IMR-90 (cell line): ENCODE measurements at regions of chr17 and their contacts with region 1.

Region 1: DNA sequence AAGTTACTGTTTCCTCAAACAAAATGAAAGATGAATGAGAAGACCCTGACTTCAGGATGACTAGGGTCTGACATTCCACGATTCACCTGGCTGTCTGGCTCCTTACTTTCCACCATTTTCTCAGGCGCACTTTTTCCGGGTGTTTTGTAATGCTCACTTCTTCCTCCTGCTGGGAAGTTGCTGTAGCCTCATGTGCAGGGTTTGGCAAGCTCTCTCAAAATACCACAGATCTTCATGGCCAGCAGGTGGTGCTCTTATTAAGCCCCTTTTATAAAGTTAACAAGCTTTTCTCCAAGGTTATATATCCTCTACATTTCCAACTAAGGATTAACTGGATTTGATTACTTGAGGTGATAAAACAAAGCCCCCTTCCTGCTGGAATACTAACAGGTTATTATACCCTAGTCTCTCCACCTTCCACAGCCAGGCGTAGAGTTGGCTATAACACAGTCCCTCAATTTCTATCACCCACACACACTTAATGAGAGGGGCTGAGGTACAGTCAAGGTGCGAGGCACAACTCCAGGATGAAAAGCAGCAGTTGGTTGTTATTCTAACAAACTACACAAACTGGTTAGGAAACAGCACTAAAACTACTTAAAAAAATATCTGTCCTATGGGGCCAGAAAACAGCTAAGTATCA is 45.4 kb downstream of the STH start:
- DNase-seq: peak; percentile 87
- ATAC-seq: peak; percentile 81
- H3K4me3 ChIP-seq: no peak overlapping the region
- H3K27ac ChIP-seq: no peak overlapping the region
- H3K4me1 ChIP-seq: no peaks in the 10 kb centered on the region
- H3K27me3 ChIP-seq: no peaks in the 10 kb centered on the region
- CTCF ChIP-seq: peak; percentile 90
- POLR2A ChIP-seq: no peak
- RAD21 ChIP-seq: peak; percentile 75

Region 2: GRCh38 chr17:46097497-46097896 is 53.1 kb after region 1 on chr17:
- CTCF ChIA-PET with region 1: no interaction called
- POLR2A ChIA-PET with region 1: no interaction called
- dilution Hi-C with region 1: no loop called
- in situ Hi-C with region 1: no loop called
- intact Hi-C with region 1: loop called (anchors 10 kb)
- DNase-seq: peak; percentile 28
- ATAC-seq: peak; percentile 21; the same call in 1 of the 2 replicates
- H3K4me3 ChIP-seq: no peak overlapping the region
- H3K27ac ChIP-seq: no peak overlapping the region
- H3K4me1 ChIP-seq: peaks cover 3% of the 10 kb centered on the region
- H3K27me3 ChIP-seq: no peaks in the 10 kb centered on the region
- CTCF ChIP-seq: no peak
- POLR2A ChIP-seq: no peak
- RAD21 ChIP-seq: no peak

Region 3: DNA sequence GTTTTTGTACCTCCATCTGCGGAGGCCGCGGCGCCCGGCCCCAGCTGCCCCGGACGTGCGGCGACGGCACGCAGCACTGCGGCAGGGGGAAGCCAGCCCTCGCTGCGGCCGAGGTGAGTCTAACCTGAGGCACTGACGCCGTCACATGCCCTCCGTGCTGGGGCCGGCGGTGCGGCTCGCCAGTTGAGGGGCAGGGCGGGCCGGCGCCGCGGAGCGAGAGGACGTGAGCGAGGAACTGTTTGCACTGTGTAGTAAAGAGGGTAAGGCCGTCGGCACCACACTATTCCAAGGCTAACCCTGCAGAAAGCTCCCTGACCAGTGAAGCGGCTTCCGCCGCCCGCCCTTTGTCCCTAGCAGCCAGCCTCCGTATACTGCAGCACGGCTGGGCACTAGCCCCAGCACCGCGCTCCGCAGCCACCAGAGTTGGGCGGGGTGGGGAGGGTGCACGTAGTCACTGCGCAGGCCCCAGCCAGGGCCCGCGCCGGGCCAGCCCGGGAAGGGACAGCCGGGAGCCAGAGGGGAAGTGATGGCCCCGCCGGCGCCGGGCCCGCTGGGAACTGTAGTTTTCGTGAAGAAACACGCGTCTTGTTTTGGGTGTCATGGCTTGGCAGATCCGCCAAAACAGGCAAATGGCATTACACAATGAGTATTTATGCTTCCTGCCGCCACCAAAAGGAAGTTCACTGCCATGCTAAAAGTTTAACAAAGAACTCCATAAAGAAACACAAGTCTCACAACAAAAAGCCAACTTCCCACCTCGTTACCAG is 149.4 kb after region 1 on chr17:
- CTCF ChIA-PET with region 1: interaction called, 7 read pairs
- POLR2A ChIA-PET with region 1: no interaction called
- dilution Hi-C with region 1: no loop called
- in situ Hi-C with region 1: no loop called
- intact Hi-C with region 1: loop called (anchors 1 kb)
- DNase-seq: peak; percentile 88
- ATAC-seq: peak; percentile 88
- H3K4me3 ChIP-seq: peak overlapping the region; percentile 62
- H3K27ac ChIP-seq: peak overlapping the region; percentile 78
- H3K4me1 ChIP-seq: peaks cover 8% of the 10 kb centered on the region
- H3K27me3 ChIP-seq: no peaks in the 10 kb centered on the region
- CTCF ChIP-seq: no peak
- POLR2A ChIP-seq: no peak; the same call in 1 of the 2 replicates
- RAD21 ChIP-seq: no peak